ENCODE measurements at regions of chr12 and their contacts with region 1.

Region 1: DNA sequence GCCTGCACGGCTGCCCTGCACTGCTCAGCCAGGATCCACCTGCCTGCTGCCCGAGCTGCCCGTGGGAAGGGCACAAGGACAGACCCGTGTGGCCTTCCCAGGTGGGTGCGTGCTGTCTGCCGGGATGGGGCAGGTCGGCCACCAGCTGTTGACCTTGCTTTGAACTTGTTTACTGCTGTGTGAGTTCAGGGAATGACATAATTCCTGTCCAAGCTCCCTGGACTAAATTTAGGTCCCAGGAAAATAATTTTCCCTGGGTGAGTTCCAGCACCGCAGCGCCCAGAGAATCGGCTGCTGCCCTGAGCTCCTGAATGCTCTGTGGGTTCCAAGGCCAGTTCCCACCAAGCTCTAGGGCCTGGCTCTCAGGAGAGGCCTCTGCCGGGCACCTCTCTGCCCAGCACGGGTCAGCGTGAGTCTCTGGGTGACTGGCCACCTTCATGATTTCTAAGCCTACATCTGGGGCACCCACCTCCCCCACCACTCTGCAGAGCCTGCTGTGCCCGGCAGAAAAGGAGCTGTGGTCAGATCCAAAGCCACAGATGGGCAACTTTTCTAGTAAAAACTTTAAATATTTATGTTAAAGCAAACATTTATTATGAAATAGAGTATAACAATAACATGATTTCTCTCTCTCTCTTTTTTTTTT is 27.2 kb upstream of the MLXIP start:
- DNase-seq: no peak
- H3K4me3 Mint-ChIP-seq: no peak overlapping the region
- H3K27ac Mint-ChIP-seq: no peak overlapping the region
- H3K4me1 Mint-ChIP-seq: peaks cover 4% of the 10 kb centered on the region
- H3K27me3 Mint-ChIP-seq: no peaks in the 10 kb centered on the region

Region 2: GRCh38 chr12:121955258-121956235 is 95.8 kb before region 1 on chr12:
- CTCF ChIA-PET with region 1: no interaction called
- POLR2A ChIA-PET with region 1: no interaction called
- intact Hi-C with region 1: no loop called
- DNase-seq: no peak
- H3K4me3 Mint-ChIP-seq: no peak overlapping the region
- H3K27ac Mint-ChIP-seq: no peak overlapping the region
- H3K4me1 Mint-ChIP-seq: no peaks in the 10 kb centered on the region
- H3K27me3 Mint-ChIP-seq: no peaks in the 10 kb centered on the region

Region 3: GRCh38 chr12:122064025-122064777 is 12.8 kb after region 1 on chr12:
- CTCF ChIA-PET with region 1: interaction called, 14 read pairs
- POLR2A ChIA-PET with region 1: no interaction called
- intact Hi-C with region 1: no loop called
- DNase-seq: peak; percentile 58
- H3K4me3 Mint-ChIP-seq: no peak overlapping the region
- H3K27ac Mint-ChIP-seq: no peak overlapping the region
- H3K4me1 Mint-ChIP-seq: peaks cover 10% of the 10 kb centered on the region
- H3K27me3 Mint-ChIP-seq: no peaks in the 10 kb centered on the region

Region 4: GRCh38 chr12:122107261-122107660 is 55.9 kb after region 1 on chr12:
- CTCF ChIA-PET with region 1: interaction called, 17 read pairs
- POLR2A ChIA-PET with region 1: no interaction called
- intact Hi-C with region 1: no loop called
- DNase-seq: no peak
- H3K4me3 Mint-ChIP-seq: no peak overlapping the region
- H3K27ac Mint-ChIP-seq: no peak overlapping the region
- H3K4me1 Mint-ChIP-seq: peaks cover 64% of the 10 kb centered on the region
- H3K27me3 Mint-ChIP-seq: no peaks in the 10 kb centered on the region

Region 5: GRCh38 chr12:122123051-122123760 is 71.9 kb after region 1 on chr12:
- CTCF ChIA-PET with region 1: interaction called, 159 read pairs
- POLR2A ChIA-PET with region 1: no interaction called
- intact Hi-C with region 1: loop called (anchors 1 kb)
- DNase-seq: peak; percentile 79
- H3K4me3 Mint-ChIP-seq: no peak overlapping the region
- H3K27ac Mint-ChIP-seq: no peak overlapping the region
- H3K4me1 Mint-ChIP-seq: peaks cover 25% of the 10 kb centered on the region
- H3K27me3 Mint-ChIP-seq: no peaks in the 10 kb centered on the region

Region 6: GRCh38 chr12:122190842-122191668 is 139.7 kb after region 1 on chr12:
- CTCF ChIA-PET with region 1: interaction called, 14 read pairs
- POLR2A ChIA-PET with region 1: no interaction called
- intact Hi-C with region 1: loop called (anchors 1 kb)
- DNase-seq: peak; percentile 85
- H3K4me3 Mint-ChIP-seq: no peak overlapping the region
- H3K27ac Mint-ChIP-seq: no peak overlapping the region
- H3K4me1 Mint-ChIP-seq: no peaks in the 10 kb centered on the region
- H3K27me3 Mint-ChIP-seq: no peaks in the 10 kb centered on the region

Region 7: GRCh38 chr12:122399592-122400373 is 348.4 kb after region 1 on chr12:
- CTCF ChIA-PET with region 1: no interaction called
- POLR2A ChIA-PET with region 1: no interaction called
- intact Hi-C with region 1: no loop called
- DNase-seq: peak; percentile 67
- H3K4me3 Mint-ChIP-seq: peak overlapping the region; percentile 27
- H3K27ac Mint-ChIP-seq: peak overlapping the region; percentile 77
- H3K4me1 Mint-ChIP-seq: peaks cover 48% of the 10 kb centered on the region
- H3K27me3 Mint-ChIP-seq: no peaks in the 10 kb centered on the region